ENCODE measurements at regions of chr11 and their contacts with region 1.

Region 1: GRCh38 chr11:76318744-76319384 is 62.1 kb downstream of the THAP12 start:
- DNase-seq: peak; percentile 81 to 84
- H3K4me3 ChIP-seq: no peak overlapping the region
- H3K27ac ChIP-seq: no peak overlapping the region
- H3K4me1 ChIP-seq: peaks cover 0 to 12% of the 10 kb centered on the region in 2 donors
- H3K27me3 ChIP-seq: peaks cover 3% of the 10 kb centered on the region
- CTCF ChIP-seq: peak; percentile 58 to 91 (median 87)
- POLR2A ChIP-seq: no peak

Region 2: DNA sequence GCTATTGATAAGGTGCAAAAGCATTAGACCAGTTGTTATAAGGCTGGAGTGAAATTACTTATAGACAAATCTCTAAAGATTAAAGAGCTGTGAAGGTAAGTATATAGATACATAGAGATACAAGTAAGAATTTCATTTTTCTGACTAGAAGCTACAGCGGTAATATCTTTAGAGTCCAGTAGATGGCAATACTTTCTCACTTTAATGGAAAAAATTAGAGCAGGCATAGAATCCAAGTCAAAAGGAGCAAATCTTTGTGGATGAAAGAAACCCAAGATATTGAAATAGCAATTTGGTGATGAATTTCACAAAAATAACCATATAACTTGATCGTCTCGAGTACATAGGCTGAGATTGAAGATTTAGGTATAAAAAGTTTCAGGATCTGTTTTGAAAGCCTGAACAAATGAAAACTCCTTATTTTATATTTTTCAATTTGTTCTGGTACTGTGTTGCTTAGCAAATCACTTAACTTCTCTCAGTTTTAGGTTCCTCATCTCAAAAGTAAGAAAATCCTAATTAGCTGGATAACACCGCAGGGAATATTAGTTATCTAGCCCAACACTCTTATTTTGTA is 421.9 kb before region 1 on chr11:
- intact Hi-C with region 1: loop called (anchors 5 kb)
- DNase-seq: no peak
- H3K4me3 ChIP-seq: no peak overlapping the region
- H3K27ac ChIP-seq: no peak overlapping the region
- H3K4me1 ChIP-seq: no peaks in the 10 kb centered on the region
- H3K27me3 ChIP-seq: no peaks in the 10 kb centered on the region
- CTCF ChIP-seq: peak; percentile 49 to 87 (median 66)
- POLR2A ChIP-seq: no peak

Region 3: DNA sequence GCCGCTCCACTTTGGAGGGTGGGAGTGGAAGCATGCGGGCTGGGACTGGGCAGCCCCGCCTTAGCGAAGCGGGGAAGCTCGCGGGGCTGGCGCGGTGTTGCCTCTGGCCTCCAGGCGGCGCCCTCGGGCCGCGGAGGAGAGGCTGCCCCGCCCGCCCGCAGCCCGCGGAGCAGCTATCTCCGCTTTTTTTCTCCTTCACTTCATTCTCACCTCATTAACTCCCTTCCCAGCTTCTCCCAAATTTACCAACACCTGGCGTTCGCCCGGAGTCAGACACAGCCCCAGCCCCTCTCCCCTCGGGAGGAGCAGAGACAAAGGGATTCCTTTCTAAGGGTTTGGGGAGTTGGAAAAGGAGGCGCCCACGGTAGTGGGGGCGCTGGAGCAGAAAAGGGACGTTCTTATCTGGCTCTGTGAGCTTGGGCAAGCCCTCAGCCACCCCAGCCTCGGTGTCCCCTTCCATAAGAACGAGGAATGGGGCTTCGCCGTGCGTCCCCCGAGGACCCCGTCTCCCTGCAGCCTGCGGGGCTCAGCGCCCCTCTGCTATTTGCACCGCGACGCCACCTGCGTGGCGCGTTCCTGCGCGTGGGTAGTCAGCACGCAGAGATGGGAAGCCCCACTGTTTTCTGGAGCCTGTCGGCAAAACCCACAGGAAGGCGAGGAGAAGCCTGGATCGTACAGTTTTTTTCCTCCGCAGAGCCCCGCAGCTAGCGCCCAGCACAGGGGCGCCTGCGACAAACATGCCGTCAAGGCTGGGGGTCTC is 111.0 kb before region 1 on chr11:
- intact Hi-C with region 1: loop called (anchors 2 kb)
- DNase-seq: peak; percentile 70 to 71
- H3K4me3 ChIP-seq: peak overlapping the region in 2 of 3 donors; percentile 6 to 46
- H3K27ac ChIP-seq: peak overlapping the region in 2 of 3 donors; percentile 56 to 67
- H3K4me1 ChIP-seq: peaks cover 30 to 46% of the 10 kb centered on the region in 2 donors
- H3K27me3 ChIP-seq: no peaks in the 10 kb centered on the region
- CTCF ChIP-seq: peak; percentile 67 to 97 (median 92)
- POLR2A ChIP-seq: no peak

Measured in thyroid gland (tissue), 4 donors.